HCT116 (cell line): ENCODE measurements at regions of chr20 and their contacts with region 1.

Region 1: DNA sequence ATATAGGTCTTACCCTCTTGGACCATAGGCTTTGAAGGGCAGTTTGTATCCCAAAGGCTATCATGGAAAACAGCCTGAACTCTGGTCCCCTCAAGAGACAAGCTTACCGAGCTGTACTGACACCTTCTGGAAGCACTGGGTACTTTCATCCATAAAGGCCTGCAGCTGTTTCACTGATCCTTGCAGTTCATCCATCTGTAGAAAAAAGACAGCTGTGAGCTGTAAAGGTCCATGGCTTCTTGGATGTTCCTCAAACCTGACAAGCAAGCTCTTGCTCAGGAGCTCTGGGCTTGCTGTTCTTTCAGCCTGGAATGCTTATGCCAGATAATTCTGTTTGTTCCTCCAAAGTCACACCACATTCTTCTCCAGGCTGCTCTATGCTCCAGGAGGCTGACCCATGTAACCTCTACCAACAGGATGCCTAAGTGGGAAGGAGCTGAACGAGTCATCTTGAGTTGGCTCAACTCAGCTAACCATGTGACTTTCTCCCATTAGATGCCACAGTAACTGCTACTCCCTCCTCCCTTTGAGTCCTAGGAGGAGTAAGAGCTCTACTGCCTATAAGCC is 8.8 kb upstream of the NDRG3 start:
- DNase-seq: peak; percentile 37
- ATAC-seq: peak; percentile 95
- H3K4me3 ChIP-seq: no peak overlapping the region
- H3K27ac ChIP-seq: no peak overlapping the region
- H3K4me1 ChIP-seq: peaks cover 0 to 5% of the 10 kb centered on the region in 2 experiments; a peak in 1 of 4 replicates
- H3K27me3 ChIP-seq: no peaks in the 10 kb centered on the region
- CTCF ChIP-seq: peak; percentile 69 to 76 (median 74)
- POLR2A ChIP-seq: no peak
- RAD21 ChIP-seq: peak; percentile 71

Region 2: GRCh38 chr20:36613974-36614373 is 140.8 kb before region 1 on chr20:
- CTCF ChIA-PET with region 1: interaction called, 13 read pairs
- POLR2A ChIA-PET with region 1: interaction called, 3 read pairs
- RAD21 ChIA-PET with region 1: no interaction called
- intact Hi-C with region 1: loop called (anchors 1 kb)
- DNase-seq: no peak
- ATAC-seq: no peak; the same call in 1 of the 2 replicates
- H3K4me3 ChIP-seq: no peak overlapping the region
- H3K27ac ChIP-seq: 0 out of 2 replicates have a peak overlapping the region, but pooled peaks have one; percentile 10
- H3K4me1 ChIP-seq: peaks cover 0 to 13% of the 10 kb centered on the region in 2 experiments; a peak in 2 of 4 replicates
- H3K27me3 ChIP-seq: no peaks in the 10 kb centered on the region
- CTCF ChIP-seq: no peak
- POLR2A ChIP-seq: no peak
- RAD21 ChIP-seq: no peak

Region 3: GRCh38 chr20:36773597-36774390 is 19.1 kb after region 1 on chr20 and contains the start of gene DSN1:
- CTCF ChIA-PET with region 1: interaction called, 10 read pairs
- POLR2A ChIA-PET with region 1: interaction called, 3 read pairs
- RAD21 ChIA-PET with region 1: no interaction called
- intact Hi-C with region 1: no loop called
- DNase-seq: peak; percentile 95
- ATAC-seq: peak; percentile 92
- H3K4me3 ChIP-seq: peak within 1 kb of the TSS; percentile 66 to 73
- H3K27ac ChIP-seq: peak within 1 kb of the TSS; percentile 86
- H3K4me1 ChIP-seq: peaks cover 9 to 22% of the 10 kb centered on the region in 2 experiments; a peak in 3 of 4 replicates
- H3K27me3 ChIP-seq: no peaks in the 10 kb centered on the region
- CTCF ChIP-seq: peak; percentile 48 to 82 (median 81); a peak in 4 of 6 replicates
- POLR2A ChIP-seq: peak; percentile 75
- RAD21 ChIP-seq: 0 out of 2 replicates have a peak, but pooled peaks have one; percentile 48
- total RNA-seq, gene DSN1: 27.9 TPM